PC-3 (cell line): ENCODE measurements at regions of chr1 and their contacts with region 1.

Region 1: GRCh38 chr1:167121375-167122120 is 27.7 kb downstream of the STYXL2 start:
- DNase-seq: peak; percentile 66
- ATAC-seq: peak; percentile 63
- H3K4me3 ChIP-seq: peak overlapping the region; percentile 68
- H3K27ac ChIP-seq: no peak overlapping the region
- H3K4me1 ChIP-seq: no peaks in the 10 kb centered on the region
- H3K27me3 ChIP-seq: no peaks in the 10 kb centered on the region
- CTCF ChIP-seq: no peak

Region 2: GRCh38 chr1:166489670-166490436 is 631.7 kb before region 1 on chr1:
- CTCF ChIA-PET with region 1: no interaction called
- POLR2A ChIA-PET with region 1: no interaction called
- intact Hi-C with region 1: loop called (anchors 10 kb)
- DNase-seq: peak; percentile 74
- ATAC-seq: peak; percentile 82
- H3K4me3 ChIP-seq: peak overlapping the region; percentile 66
- H3K27ac ChIP-seq: peak overlapping the region; percentile 68
- H3K4me1 ChIP-seq: peaks cover 38% of the 10 kb centered on the region
- H3K27me3 ChIP-seq: no peaks in the 10 kb centered on the region
- CTCF ChIP-seq: no peak

Region 3: GRCh38 chr1:167013108-167013929 is 108.2 kb before region 1 on chr1:
- CTCF ChIA-PET with region 1: no interaction called
- POLR2A ChIA-PET with region 1: no interaction called
- intact Hi-C with region 1: no loop called
- DNase-seq: no peak
- ATAC-seq: no peak
- H3K4me3 ChIP-seq: no peak overlapping the region
- H3K27ac ChIP-seq: no peak overlapping the region
- H3K4me1 ChIP-seq: no peaks in the 10 kb centered on the region
- H3K27me3 ChIP-seq: peaks cover 72% of the 10 kb centered on the region
- CTCF ChIP-seq: no peak

Region 4: GRCh38 chr1:167090314-167090942 is 31.1 kb before region 1 on chr1 and contains the start of gene GPA33:
- CTCF ChIA-PET with region 1: no interaction called
- POLR2A ChIA-PET with region 1: no interaction called
- intact Hi-C with region 1: no loop called
- DNase-seq: no peak
- ATAC-seq: no peak
- H3K4me3 ChIP-seq: no peak within 1 kb of the TSS
- H3K27ac ChIP-seq: no peak within 1 kb of the TSS
- H3K4me1 ChIP-seq: peaks cover 12% of the 10 kb centered on the region
- H3K27me3 ChIP-seq: no peaks in the 10 kb centered on the region
- CTCF ChIP-seq: no peak
- total RNA-seq, gene GPA33: 0.04 and 0.12 TPM in 2 replicates

Region 5: GRCh38 chr1:167258858-167259257 is 137.3 kb after region 1 on chr1:
- CTCF ChIA-PET with region 1: interaction called, 14 read pairs
- POLR2A ChIA-PET with region 1: no interaction called
- intact Hi-C with region 1: no loop called
- DNase-seq: no peak
- ATAC-seq: no peak; the same call in 1 of the 2 replicates
- H3K4me3 ChIP-seq: no peak overlapping the region
- H3K27ac ChIP-seq: no peak overlapping the region
- H3K4me1 ChIP-seq: peaks cover 3% of the 10 kb centered on the region; the same call in 1 of the 2 replicates
- H3K27me3 ChIP-seq: no peaks in the 10 kb centered on the region
- CTCF ChIP-seq: no peak